Naive thymus-derived CD8-positive, alpha-beta T cell (primary cell): ENCODE measurements at regions of chr1 and their contacts with region 1.

Region 1: GRCh38 chr1:28581536-28582247 is 10.4 kb upstream of the RAB42 start:
- DNase-seq: peak; percentile 84 to 95 (median 90)
- ATAC-seq: peak; percentile 88
- H3K4me3 Mint-ChIP-seq: peak overlapping the region; percentile 93 to 99 (median 96)
- H3K27ac Mint-ChIP-seq: peak overlapping the region; percentile 87 to 97 (median 96)
- H3K4me1 Mint-ChIP-seq: peaks cover 16 to 50% (median 42%) of the 10 kb centered on the region in 4 donors
- H3K27me3 Mint-ChIP-seq: no peaks in the 10 kb centered on the region

Region 2: GRCh38 chr1:28235755-28236655 is 345.7 kb before region 1 on chr1 and contains the start of gene ATP5IF1:
- POLR2A ChIA-PET with region 1: interaction called, 12 read pairs
- DNase-seq: peak; percentile 84 to 97 (median 94)
- ATAC-seq: peak; percentile 95
- H3K4me3 Mint-ChIP-seq: peak within 1 kb of the TSS in 1 of 10 donors; percentile 29
- H3K27ac Mint-ChIP-seq: no peak within 1 kb of the TSS
- H3K4me1 Mint-ChIP-seq: peaks cover 8 to 28% (median 18%) of the 10 kb centered on the region in 4 donors
- H3K27me3 Mint-ChIP-seq: no peaks in the 10 kb centered on the region
- polyA plus RNA-seq, gene ATP5IF1: 468 to 666 (median 606) TPM

Region 3: DNA sequence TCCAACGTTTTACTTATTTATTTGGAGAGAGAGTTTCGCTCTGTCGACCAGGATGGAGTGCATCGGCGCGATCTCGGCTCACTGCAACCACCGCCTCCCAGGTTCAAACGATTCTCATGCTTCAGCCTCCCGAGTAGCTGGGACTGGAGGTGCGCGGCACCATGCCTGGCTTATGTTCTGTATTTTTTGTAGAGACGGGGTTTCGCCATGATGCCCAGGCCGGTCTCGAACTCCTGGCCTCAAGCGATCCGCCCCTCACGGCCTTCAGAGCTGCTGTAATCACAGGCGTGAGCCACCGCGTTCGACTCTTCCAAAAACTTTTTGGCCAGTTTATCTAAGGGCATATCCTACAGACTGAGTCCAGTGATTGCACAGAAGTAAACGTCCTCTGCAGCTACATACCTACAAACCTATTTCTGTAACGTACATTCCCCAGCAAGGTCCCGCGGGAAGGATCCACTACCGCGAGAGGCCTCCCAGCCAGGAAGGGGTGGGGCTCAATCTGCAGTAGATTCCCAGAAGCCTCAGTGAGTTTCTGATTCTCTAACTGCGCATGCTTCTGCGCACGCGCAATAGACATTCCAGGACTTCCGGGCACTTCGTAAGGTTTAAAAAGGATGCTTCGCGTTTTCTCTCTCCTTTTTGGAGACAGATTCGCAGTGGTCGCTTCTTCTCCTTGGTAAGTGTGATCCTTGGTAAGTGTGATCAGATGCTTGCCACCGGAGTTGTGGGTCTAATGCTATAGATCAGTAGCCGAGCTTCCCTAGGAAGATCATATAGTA is 76.1 kb before region 1 on chr1 and contains the start of gene RCC1:
- POLR2A ChIA-PET with region 1: interaction called, 87 read pairs
- DNase-seq: peak; percentile 84 to 98 (median 95)
- ATAC-seq: peak; percentile 91 to 94
- H3K4me3 Mint-ChIP-seq: peak within 1 kb of the TSS; percentile 94 to 99 (median 98)
- H3K27ac Mint-ChIP-seq: peak within 1 kb of the TSS; percentile 97 to 100 (median 98)
- H3K4me1 Mint-ChIP-seq: peaks cover 15 to 52% (median 38%) of the 10 kb centered on the region in 4 donors
- H3K27me3 Mint-ChIP-seq: no peaks in the 10 kb centered on the region
- polyA plus RNA-seq, gene RCC1: 11.7 to 16.1 (median 12.2) TPM

Region 4: DNA sequence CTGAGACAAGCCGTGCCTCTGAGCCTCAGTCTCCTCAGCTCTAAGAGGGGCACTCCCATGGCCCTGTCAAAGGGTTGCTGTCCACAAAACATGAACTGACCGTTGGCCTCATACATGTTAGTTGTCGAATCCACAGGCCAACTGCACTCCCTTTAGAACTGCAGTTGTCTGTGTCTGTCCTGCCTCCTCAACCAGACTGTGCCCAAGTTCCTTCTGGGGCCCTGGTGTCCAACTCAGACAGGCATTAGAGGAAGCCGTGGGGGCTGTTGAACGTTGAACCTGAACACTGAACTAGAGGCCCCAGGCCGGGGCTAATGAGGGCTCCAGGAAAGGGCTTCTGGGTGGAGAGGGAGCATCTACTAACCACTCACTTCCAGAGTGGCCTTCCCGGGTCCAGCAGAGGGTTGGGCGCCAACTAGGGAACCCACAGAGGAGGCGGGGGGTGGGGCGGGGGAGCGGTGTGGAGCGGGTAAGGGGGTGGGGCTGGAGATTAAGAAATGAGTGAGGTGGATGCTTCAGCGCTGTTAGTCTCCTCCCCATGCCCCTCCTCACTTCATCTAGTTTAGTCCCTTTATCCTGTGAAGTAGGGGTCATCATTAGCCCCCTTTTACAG is 10.1 kb after region 1 on chr1 and contains the start of gene RAB42:
- POLR2A ChIA-PET with region 1: interaction called, 33 read pairs
- DNase-seq: no peak
- ATAC-seq: peak; percentile 66 to 69
- H3K4me3 Mint-ChIP-seq: peak within 1 kb of the TSS; percentile 77 to 88 (median 84)
- H3K27ac Mint-ChIP-seq: peak within 1 kb of the TSS in 4 of 10 donors; percentile 19 to 82 (median 42)
- H3K4me1 Mint-ChIP-seq: peaks cover 3 to 15% (median 8%) of the 10 kb centered on the region in 4 donors
- H3K27me3 Mint-ChIP-seq: peaks cover 0 to 11% (median 3%) of the 10 kb centered on the region in 5 donors
- polyA plus RNA-seq, gene RAB42: not detected

Region 5: DNA sequence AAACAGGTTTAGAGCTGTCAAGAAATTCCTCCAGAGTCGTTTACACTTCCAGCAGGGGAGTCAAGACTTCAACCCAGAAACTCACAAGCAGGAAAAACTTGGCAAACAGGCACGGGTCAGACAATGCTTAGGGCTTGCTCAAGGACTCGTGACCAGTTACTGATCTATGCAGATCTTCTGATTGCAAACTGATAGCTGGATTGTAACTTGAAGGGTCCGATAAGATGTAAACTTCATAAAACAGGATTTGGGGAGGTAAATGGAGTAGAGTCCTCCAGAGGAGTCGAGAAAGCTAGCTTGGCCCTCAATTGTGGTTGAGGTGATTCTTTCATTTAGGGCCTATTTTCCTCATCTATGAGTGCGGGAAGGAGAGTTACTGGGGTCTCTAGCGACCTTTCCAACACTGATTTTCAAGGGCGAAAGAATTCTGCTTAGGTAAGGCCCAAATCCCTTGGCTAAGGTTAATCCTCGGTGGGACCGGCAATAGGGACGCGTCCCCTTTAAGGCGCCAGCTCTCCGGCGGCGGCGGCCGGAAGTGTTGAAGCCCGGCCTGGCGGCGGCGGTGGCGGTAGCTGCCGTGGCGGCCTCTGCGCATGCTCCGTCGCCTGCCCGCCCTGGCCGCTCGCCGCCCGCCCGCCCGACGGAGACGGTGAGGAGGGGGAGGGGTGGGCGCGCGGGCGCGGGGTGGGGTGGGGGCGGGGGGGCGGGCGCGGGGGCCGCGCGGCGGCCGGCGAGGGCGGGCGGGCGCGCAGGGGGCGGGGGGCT is 86.7 kb after region 1 on chr1 and contains the start of gene GMEB1:
- POLR2A ChIA-PET with region 1: interaction called, 22 read pairs
- DNase-seq: peak; percentile 67 to 91 (median 82)
- ATAC-seq: peak; percentile 71 to 72
- H3K4me3 Mint-ChIP-seq: peak within 1 kb of the TSS; percentile 84 to 98 (median 94)
- H3K27ac Mint-ChIP-seq: peak within 1 kb of the TSS; percentile 90 to 100 (median 98)
- H3K4me1 Mint-ChIP-seq: peaks cover 12 to 31% (median 24%) of the 10 kb centered on the region in 4 donors
- H3K27me3 Mint-ChIP-seq: no peaks in the 10 kb centered on the region
- polyA plus RNA-seq, gene GMEB1: 12.5 to 18.2 (median 17.1) TPM

Region 6: GRCh38 chr1:29181413-29182225 is 599.9 kb after region 1 on chr1 and contains the start of gene SRSF4:
- POLR2A ChIA-PET with region 1: interaction called, 15 read pairs
- DNase-seq: peak; percentile 96 to 99 (median 98)
- ATAC-seq: peak; percentile 89 to 91
- H3K4me3 Mint-ChIP-seq: peak within 1 kb of the TSS; percentile 89 to 96 (median 94)
- H3K27ac Mint-ChIP-seq: peak within 1 kb of the TSS; percentile 85 to 97 (median 96)
- H3K4me1 Mint-ChIP-seq: peaks cover 25 to 52% (median 45%) of the 10 kb centered on the region in 4 donors
- H3K27me3 Mint-ChIP-seq: no peaks in the 10 kb centered on the region
- polyA plus RNA-seq, gene SRSF4: 73.2 to 104 (median 81.5) TPM